Activated CD4-positive, alpha-beta memory T cell treated with anti-CD3 and anti-CD28 coated beads for 36 hours (primary cell): ENCODE measurements at regions of chr6 and their contacts with region 1.

Region 1: GRCh38 chr6:42453031-42453653 is 1.4 kb upstream of the TRERF1 start:
- DNase-seq: peak; percentile 86
- H3K4me3 Mint-ChIP-seq: peak overlapping the region; percentile 98
- H3K27ac Mint-ChIP-seq: no peak overlapping the region
- H3K4me1 Mint-ChIP-seq: peaks cover 23% of the 10 kb centered on the region
- H3K27me3 Mint-ChIP-seq: no peaks in the 10 kb centered on the region

Region 2: GRCh38 chr6:42292004-42292740 is 161.0 kb before region 1 on chr6:
- CTCF ChIA-PET with region 1: no interaction called
- POLR2A ChIA-PET with region 1: no interaction called
- intact Hi-C with region 1: no loop called
- DNase-seq: peak; percentile 61
- H3K4me3 Mint-ChIP-seq: no peak overlapping the region
- H3K27ac Mint-ChIP-seq: peak overlapping the region; percentile 76
- H3K4me1 Mint-ChIP-seq: peaks cover 58% of the 10 kb centered on the region
- H3K27me3 Mint-ChIP-seq: no peaks in the 10 kb centered on the region

Region 3: GRCh38 chr6:42352856-42353564 is 100.1 kb before region 1 on chr6:
- CTCF ChIA-PET with region 1: no interaction called
- POLR2A ChIA-PET with region 1: no interaction called
- intact Hi-C with region 1: loop called (anchors 1 kb)
- DNase-seq: no peak
- H3K4me3 Mint-ChIP-seq: no peak overlapping the region
- H3K27ac Mint-ChIP-seq: no peak overlapping the region
- H3K4me1 Mint-ChIP-seq: peaks cover 18% of the 10 kb centered on the region
- H3K27me3 Mint-ChIP-seq: no peaks in the 10 kb centered on the region

Region 4: DNA sequence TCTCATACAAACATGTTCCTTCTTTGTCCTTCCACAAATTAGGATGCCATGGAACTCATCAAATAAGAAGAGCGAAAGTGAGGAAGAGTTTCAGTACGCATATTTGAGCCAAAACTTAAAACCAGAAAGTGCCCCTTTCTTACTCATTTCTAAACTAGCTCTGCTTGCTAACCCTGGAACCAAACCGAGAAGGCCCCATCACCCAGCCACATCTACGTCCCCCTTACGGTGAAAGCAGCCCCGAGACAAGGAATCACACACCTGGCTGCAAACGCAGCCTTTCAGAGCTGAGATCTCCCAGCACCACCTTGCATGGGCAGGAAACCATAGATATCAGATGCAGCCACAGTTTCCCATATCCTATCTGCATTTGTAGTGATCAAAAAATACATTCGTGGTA is 29.9 kb before region 1 on chr6:
- CTCF ChIA-PET with region 1: no interaction called
- POLR2A ChIA-PET with region 1: interaction called, 3 read pairs
- intact Hi-C with region 1: loop called (anchors 1 kb)
- DNase-seq: peak; percentile 74
- H3K4me3 Mint-ChIP-seq: peak overlapping the region; percentile 18
- H3K27ac Mint-ChIP-seq: peak overlapping the region; percentile 72
- H3K4me1 Mint-ChIP-seq: peaks cover 57% of the 10 kb centered on the region
- H3K27me3 Mint-ChIP-seq: no peaks in the 10 kb centered on the region

Region 5: GRCh38 chr6:42505377-42505702 is 52.2 kb after region 1 on chr6:
- CTCF ChIA-PET with region 1: interaction called, 3 read pairs
- POLR2A ChIA-PET with region 1: interaction called, 3 read pairs
- intact Hi-C with region 1: loop called (anchors 5 kb)
- DNase-seq: no peak
- H3K4me3 Mint-ChIP-seq: no peak overlapping the region
- H3K27ac Mint-ChIP-seq: no peak overlapping the region
- H3K4me1 Mint-ChIP-seq: peaks cover 33% of the 10 kb centered on the region
- H3K27me3 Mint-ChIP-seq: no peaks in the 10 kb centered on the region